Heart right ventricle (tissue), 16 donors: ENCODE measurements at regions of chr17 and their contacts with region 1.

Region 1: GRCh38 chr17:36057911-36058310 is 6.2 kb upstream of the CCL18 start:
- DNase-seq: no peak
- ATAC-seq: no peak
- H3K4me3 ChIP-seq: no peak overlapping the region
- H3K27ac ChIP-seq: peak overlapping the region in 1 of 10 donors; percentile 39
- H3K4me1 ChIP-seq: peaks cover 0 to 16% (median 0%) of the 10 kb centered on the region in 9 donors
- H3K27me3 ChIP-seq: peaks cover 0 to 7% (median 0%) of the 10 kb centered on the region in 7 donors
- CTCF ChIP-seq: no peak

Region 2: DNA sequence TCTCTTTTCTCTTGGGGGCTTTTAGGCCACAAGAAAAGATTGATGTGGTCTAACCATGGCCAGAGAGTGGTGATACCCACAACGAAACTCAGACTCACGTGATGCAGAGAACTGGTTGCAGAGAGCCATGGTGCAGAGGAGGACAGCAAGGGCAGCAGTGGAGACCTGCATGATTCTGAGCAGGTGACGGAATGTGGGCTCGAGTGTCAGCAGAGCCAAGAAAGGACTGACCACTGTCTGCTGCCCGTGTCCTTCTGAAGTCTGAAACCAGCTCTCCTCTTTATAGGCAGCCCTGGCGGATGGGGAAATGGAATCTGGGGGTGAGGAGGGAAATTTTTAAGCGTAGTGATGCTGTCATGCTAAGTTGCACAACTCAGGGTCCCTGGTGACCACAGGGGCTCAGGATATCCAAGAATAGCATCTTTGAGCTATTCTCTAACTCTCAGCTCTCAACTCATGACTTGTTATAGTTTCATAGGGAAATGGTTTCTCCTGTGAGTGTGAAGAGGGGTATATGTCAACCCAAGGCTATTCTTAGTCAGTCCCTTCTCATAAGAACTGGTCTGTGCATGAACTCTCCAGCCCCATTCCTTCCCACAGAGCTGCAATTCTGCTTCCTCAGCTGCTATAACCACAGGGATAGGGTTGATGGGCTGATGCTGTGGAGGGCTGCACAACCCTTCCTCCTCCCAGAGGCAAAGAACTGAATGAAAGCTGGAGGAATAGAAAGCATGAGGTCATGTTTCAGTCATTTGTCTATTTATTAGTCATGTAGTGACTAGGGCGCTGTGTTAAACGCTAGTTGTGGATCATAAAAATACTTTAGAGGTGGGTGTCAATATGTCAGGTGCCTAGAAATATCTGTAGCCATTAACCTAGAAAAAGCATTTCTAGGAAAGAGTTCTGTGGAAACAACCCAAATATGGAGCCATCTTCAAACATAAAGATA is 32.3 kb after region 1 on chr17 and contains the start of gene CCL3:
- intact Hi-C with region 1: no loop called
- DNase-seq: peak in 1 of 2 donors; percentile 32
- ATAC-seq: peak; percentile 57 to 82 (median 74)
- H3K4me3 ChIP-seq: peak within 1 kb of the TSS in 1 of 10 donors; percentile 24
- H3K27ac ChIP-seq: peak within 1 kb of the TSS in 2 of 10 donors; percentile 12 to 65
- H3K4me1 ChIP-seq: peaks cover 0 to 40% (median 0%) of the 10 kb centered on the region in 9 donors
- H3K27me3 ChIP-seq: peaks cover 0 to 19% (median 6%) of the 10 kb centered on the region in 7 donors
- CTCF ChIP-seq: no peak
- total RNA-seq, gene CCL3: 0.24 to 12.3 (median 0.52) TPM in 7 of 10 donors, not detected in the others

Region 3: GRCh38 chr17:36117505-36118382 is 59.8 kb after region 1 on chr17:
- intact Hi-C with region 1: loop called in 1 of 10 experiments (anchors 10 kb)
- DNase-seq: no peak
- ATAC-seq: peak in 1 of 8 donors; percentile 20
- H3K4me3 ChIP-seq: no peak overlapping the region
- H3K27ac ChIP-seq: no peak overlapping the region
- H3K4me1 ChIP-seq: no peaks in the 10 kb centered on the region
- H3K27me3 ChIP-seq: no peaks in the 10 kb centered on the region
- CTCF ChIP-seq: no peak

Region 4: DNA sequence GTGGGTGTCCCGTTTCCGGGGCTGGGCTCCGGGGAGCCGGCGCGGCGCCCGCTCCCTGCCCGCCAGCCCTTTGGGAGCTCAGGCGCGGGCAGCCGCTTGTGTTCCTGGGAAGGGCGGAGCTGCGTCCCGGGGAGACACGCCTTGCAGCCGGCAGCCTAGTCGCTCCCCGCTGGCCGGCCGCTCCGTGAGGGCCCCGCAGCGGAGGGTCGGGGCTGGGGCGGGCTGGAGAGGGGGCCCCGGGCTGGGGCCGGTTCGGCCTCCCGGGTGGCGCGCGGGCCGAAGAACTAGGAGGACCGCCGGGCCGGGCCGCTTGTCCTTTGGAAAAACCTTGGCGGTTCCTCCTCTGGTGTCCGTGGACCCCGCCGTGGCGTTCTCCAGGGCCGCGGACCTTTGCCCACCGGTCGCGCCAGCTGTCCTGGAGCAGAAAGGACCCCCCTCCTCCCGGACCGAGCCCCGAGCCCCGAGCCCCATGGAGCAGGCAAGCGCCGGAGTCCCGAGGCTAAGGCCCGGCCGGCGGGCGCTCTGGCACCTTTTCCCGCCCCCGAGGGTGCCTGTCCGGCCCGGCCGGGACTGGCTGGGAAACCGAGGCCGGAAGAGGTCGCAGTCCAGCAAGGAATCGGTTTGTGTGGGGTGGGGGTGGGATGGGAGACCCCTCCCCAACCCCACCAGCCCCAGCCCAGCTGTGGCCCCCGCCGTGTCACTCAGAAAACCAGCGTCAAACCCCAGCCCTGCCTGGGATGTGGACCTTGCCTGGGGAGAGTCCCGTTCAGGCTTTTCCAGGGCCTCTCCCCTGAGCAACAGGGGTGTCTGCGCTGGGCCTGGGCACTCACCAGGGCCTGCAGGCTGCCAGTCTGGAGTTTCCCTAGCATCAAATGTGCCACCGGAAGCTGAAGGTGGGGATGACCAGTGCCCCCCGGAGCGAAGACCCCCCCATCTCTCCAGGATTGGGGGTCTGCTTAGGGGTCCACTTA is 125.4 kb after region 1 on chr17:
- intact Hi-C with region 1: no loop called
- DNase-seq: peak; percentile 73 to 85
- ATAC-seq: peak; percentile 84 to 91 (median 88)
- H3K4me3 ChIP-seq: peak overlapping the region; percentile 30 to 87 (median 64)
- H3K27ac ChIP-seq: peak overlapping the region in 6 of 10 donors; percentile 51 to 90 (median 70)
- H3K4me1 ChIP-seq: peaks cover 0 to 18% (median 0%) of the 10 kb centered on the region in 9 donors
- H3K27me3 ChIP-seq: peaks cover 0 to 41% (median 7%) of the 10 kb centered on the region in 7 donors
- CTCF ChIP-seq: peak in 3 of 9 donors; percentile 22 to 36 (median 25)